Posterior vena cava (tissue), 2 donors: ENCODE measurements at regions of chr6 and their contacts with region 1.

Region 1: DNA sequence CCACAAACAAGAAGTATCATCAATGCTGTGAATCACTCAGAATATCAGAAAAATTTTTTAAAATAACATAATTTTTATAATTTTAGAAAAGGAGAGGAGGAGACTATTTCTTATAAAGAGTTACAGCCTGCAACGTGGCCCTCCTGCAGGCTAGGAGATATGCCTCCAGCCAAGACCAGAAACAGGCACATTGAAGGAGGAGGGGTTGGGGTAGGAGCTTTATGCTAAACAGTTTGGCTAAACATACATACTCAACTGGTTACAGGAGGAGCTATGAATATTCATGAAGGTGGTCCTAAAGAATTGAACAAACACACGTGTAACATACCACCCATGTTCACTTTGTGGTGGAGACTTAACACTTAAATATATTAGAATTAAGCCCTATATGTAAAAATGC is 14.2 kb upstream of the LCA5 start:
- DNase-seq: no peak

Region 2: DNA sequence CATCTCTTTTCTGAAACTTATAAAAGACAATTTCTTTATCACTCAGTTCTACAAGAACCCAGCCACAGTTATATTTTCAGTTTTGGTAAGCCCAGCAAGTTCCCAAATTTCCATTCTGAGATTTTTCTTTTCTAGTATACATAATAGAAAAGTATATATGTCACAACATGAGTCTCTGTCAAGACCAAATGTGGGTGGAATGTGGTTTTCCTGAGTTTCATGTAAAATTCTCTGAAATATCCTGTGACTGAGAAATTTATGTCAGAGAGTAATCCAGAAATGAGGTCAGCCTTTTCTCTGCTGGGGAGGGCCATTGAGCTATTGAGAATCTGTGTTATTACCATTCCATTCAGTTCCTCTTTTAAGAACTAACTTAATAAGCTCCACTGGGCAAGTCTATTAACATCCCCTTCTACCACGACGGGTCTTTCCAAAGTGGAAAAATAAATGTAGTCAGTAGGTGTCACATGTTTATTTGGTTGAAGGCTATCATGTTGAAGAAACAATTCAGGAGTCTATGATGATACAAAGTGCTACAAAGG is 216.2 kb before region 1 on chr6:
- intact Hi-C with region 1: loop called in 1 of 2 experiments (anchors 5 kb)
- DNase-seq: no peak